ENCODE measurements at regions of chr11 and their contacts with region 1.

Region 1: GRCh38 chr11:7485186-7486097 is at the start of gene OLFML1:
- DNase-seq: no peak
- ATAC-seq: peak; percentile 39; the same call in 1 of the 2 replicates
- H3K4me3 ChIP-seq: no peak within 1 kb of the TSS
- H3K27ac ChIP-seq: no peak within 1 kb of the TSS
- H3K4me1 ChIP-seq: no peaks in the 10 kb centered on the region
- H3K27me3 ChIP-seq: peaks cover 5% of the 10 kb centered on the region; the same call in 1 of the 2 replicates
- CTCF ChIP-seq: no peak
- total RNA-seq, gene OLFML1: not detected

Region 2: GRCh38 chr11:7471066-7471465 is 14.4 kb before region 1 on chr11:
- CTCF ChIA-PET with region 1: no interaction called
- POLR2A ChIA-PET with region 1: interaction called, 19 read pairs
- in situ Hi-C with region 1: no loop called
- intact Hi-C with region 1: no loop called
- DNase-seq: no peak
- ATAC-seq: no peak
- H3K4me3 ChIP-seq: no peak overlapping the region
- H3K27ac ChIP-seq: no peak overlapping the region
- H3K4me1 ChIP-seq: no peaks in the 10 kb centered on the region
- H3K27me3 ChIP-seq: peaks cover 8% of the 10 kb centered on the region
- CTCF ChIP-seq: no peak

Region 3: GRCh38 chr11:7892059-7892699 is 406.7 kb after region 1 on chr11:
- CTCF ChIA-PET with region 1: no interaction called
- POLR2A ChIA-PET with region 1: no interaction called
- in situ Hi-C with region 1: no loop called
- intact Hi-C with region 1: no loop called
- DNase-seq: peak; percentile 28
- ATAC-seq: no peak
- H3K4me3 ChIP-seq: no peak overlapping the region
- H3K27ac ChIP-seq: no peak overlapping the region
- H3K4me1 ChIP-seq: 0 out of 2 replicates have a peak, but pooled peaks cover 3% of the 10 kb centered on the region
- H3K27me3 ChIP-seq: no peaks in the 10 kb centered on the region; the same call in 1 of the 2 replicates
- CTCF ChIP-seq: no peak